CD8-positive, alpha-beta T cell (primary cell): ENCODE measurements at regions of chr4 and their contacts with region 1.

Region 1: DNA sequence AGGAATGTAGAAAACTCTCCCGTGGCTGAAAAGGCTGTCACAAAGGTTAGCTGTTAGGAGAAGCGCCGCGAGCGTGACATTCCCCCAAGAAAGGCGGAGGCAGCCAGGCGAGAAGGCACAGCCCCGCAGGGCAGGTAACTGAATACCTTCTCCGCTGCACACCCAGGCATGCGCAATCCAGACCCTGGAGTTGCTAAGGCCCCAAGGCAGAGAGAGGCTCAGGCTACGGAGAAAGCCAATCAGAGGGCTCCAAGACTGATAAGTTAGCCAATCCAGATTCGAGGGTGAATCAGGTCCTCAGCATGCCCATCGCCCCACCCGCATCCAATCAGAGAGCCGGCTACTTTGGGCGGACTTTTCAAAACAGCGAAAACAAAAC is 485 bp upstream of the CCNG2 start:
- DNase-seq: peak in 8 of 9 experiments; percentile 91 to 99 (median 97)
- ATAC-seq: peak; percentile 93
- H3K4me3 ChIP-seq: peak overlapping the region; percentile 83 to 93
- H3K4me3 Mint-ChIP-seq: peak overlapping the region; percentile 100
- H3K27ac ChIP-seq: peak overlapping the region; percentile 62 to 79
- H3K27ac Mint-ChIP-seq: peak overlapping the region; percentile 99
- H3K4me1 ChIP-seq: peaks cover 21% of the 10 kb centered on the region
- H3K4me1 Mint-ChIP-seq: peaks cover 39% of the 10 kb centered on the region
- H3K27me3 ChIP-seq: no peaks in the 10 kb centered on the region
- H3K27me3 Mint-ChIP-seq: no peaks in the 10 kb centered on the region
- CTCF ChIP-seq: no peak

Region 2: DNA sequence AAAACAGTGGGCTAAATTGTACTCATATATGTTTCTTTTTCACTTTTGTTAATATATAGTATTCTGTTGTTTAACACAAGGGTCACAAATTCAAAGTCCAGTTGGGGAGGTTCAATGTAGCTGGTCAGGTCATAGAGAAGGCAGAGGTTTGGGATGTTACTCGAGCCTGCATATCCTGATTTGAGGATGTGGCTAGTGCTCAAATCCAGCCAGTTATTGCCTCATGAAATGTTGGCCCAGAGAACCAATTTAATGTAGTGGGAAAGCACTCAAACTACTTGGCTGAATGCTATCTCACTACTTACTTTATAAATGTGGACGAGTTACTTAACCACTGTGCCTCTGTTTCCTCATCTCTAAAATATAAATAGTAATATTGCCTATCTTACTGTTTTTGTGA is 1419.7 kb before region 1 on chr4:
- CTCF ChIA-PET with region 1: no interaction called
- POLR2A ChIA-PET with region 1: no interaction called
- intact Hi-C with region 1: no loop called
- DNase-seq: no peak
- ATAC-seq: no peak
- H3K4me3 ChIP-seq: no peak overlapping the region
- H3K4me3 Mint-ChIP-seq: no peak overlapping the region
- H3K27ac ChIP-seq: no peak overlapping the region
- H3K27ac Mint-ChIP-seq: no peak overlapping the region
- H3K4me1 ChIP-seq: no peaks in the 10 kb centered on the region
- H3K4me1 Mint-ChIP-seq: peaks cover 32% of the 10 kb centered on the region
- H3K27me3 ChIP-seq: no peaks in the 10 kb centered on the region
- H3K27me3 Mint-ChIP-seq: no peaks in the 10 kb centered on the region
- CTCF ChIP-seq: no peak

Region 3: DNA sequence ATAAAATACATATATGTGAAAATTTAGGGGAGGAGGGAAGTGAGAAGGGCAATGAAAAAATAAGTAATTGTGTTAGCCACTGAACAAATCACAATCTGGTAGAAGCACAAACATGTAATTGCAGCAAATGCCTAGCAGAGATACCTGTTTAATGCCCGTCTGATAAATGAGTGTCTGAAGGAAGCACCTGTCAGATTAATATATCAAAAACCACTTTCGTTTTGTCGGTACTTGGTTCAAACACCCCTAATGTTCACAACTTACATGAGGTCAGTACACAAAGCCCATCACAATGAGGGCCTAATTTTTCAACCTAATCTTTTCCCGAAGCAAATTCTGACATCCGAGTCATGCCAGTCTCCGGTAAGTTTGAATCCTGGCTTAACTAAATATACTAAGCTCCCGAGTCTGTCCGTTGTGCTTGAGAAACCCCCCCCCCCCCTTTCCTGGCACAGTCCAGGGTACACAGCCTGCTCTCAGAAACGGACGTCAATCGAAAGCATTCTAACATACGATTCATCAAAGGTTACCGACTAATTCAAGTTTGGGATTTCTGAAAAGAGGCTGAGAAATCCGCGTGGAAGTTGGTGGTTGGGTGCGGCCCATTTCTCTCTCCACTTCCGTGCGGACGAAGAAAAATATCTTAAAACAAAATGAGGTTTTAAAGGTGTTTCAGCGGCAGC is 1166.5 kb before region 1 on chr4:
- CTCF ChIA-PET with region 1: no interaction called
- POLR2A ChIA-PET with region 1: no interaction called
- intact Hi-C with region 1: loop called in 1 of 2 experiments (anchors 2 kb)
- DNase-seq: peak in 2 of 9 experiments; percentile 8 to 32
- ATAC-seq: no peak
- H3K4me3 ChIP-seq: peak overlapping the region; percentile 78 to 91
- H3K4me3 Mint-ChIP-seq: peak overlapping the region; percentile 96
- H3K27ac ChIP-seq: peak overlapping the region; percentile 17 to 73
- H3K27ac Mint-ChIP-seq: peak overlapping the region; percentile 95
- H3K4me1 ChIP-seq: peaks cover 37% of the 10 kb centered on the region
- H3K4me1 Mint-ChIP-seq: peaks cover 29% of the 10 kb centered on the region
- H3K27me3 ChIP-seq: no peaks in the 10 kb centered on the region
- H3K27me3 Mint-ChIP-seq: peaks cover 1% of the 10 kb centered on the region
- CTCF ChIP-seq: no peak

Region 4: GRCh38 chr4:76949276-76950051 is 207.1 kb before region 1 on chr4 and contains the start of gene SEPTIN11:
- CTCF ChIA-PET with region 1: interaction called, 3 read pairs
- POLR2A ChIA-PET with region 1: interaction called, 3 read pairs
- intact Hi-C with region 1: loop called (anchors 1 to 2 kb)
- DNase-seq: peak; percentile 74 to 94 (median 84)
- ATAC-seq: peak; percentile 74
- H3K4me3 ChIP-seq: peak within 1 kb of the TSS; percentile 88 to 89
- H3K4me3 Mint-ChIP-seq: peak within 1 kb of the TSS; percentile 92
- H3K27ac ChIP-seq: peak within 1 kb of the TSS; percentile 56 to 66
- H3K27ac Mint-ChIP-seq: peak within 1 kb of the TSS; percentile 77
- H3K4me1 ChIP-seq: peaks cover 15% of the 10 kb centered on the region
- H3K4me1 Mint-ChIP-seq: peaks cover 24% of the 10 kb centered on the region
- H3K27me3 ChIP-seq: no peaks in the 10 kb centered on the region
- H3K27me3 Mint-ChIP-seq: no peaks in the 10 kb centered on the region
- CTCF ChIP-seq: no peak
- total RNA-seq, gene SEPTIN11: 12.3 to 13.1 TPM

Region 5: DNA sequence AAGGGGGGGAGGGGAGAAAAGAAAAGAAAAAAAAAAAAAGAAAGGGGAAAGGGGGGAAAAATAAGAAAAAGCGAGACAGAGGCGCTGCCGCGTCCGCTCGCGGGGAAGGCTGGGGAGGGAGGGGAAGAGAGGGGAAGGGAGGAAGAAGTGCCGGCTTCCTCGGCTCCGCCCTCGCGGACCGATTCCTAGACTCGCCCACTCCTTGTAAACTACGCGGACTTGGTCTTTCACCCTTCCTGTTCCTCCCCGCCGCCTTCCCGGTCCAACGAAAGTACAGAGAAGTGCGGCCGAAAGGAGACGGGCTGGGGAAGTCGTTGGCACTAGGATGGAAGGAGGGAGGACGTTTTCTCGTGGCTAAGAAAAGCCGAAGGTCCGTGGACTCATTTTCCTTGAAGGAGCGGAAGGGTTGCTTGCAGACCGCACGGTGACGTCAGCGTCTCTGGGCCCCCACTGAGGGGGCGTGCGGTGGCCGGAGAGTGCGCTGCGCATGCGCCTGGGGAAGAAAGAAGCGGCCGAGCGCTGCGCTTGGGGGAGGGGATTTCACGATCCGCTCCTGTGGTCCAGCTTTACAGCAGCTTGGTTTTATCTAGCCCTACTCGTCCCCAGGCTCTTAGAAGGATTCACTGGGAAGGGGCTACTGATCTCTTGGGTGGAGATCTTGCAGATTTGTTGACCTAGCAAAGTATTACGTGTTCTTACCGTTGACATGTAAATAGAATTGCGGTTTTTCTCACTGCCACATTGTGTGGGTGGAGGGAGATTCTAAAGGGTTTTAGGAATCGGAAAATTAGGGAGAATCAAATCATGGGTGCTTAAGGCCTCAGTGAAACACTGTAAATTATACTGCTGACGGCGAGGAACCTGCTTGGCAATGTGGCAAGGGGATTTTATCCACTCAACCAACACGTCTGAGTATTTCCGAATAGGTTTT is 80.4 kb before region 1 on chr4 and contains the start of gene CCNI:
- CTCF ChIA-PET with region 1: interaction called, 3 read pairs
- POLR2A ChIA-PET with region 1: interaction called, 9 read pairs
- intact Hi-C with region 1: loop called (anchors 1 kb)
- DNase-seq: peak; percentile 85 to 97 (median 92)
- ATAC-seq: peak; percentile 70
- H3K4me3 ChIP-seq: peak within 1 kb of the TSS; percentile 90 to 98
- H3K4me3 Mint-ChIP-seq: no peak within 1 kb of the TSS
- H3K27ac ChIP-seq: peak within 1 kb of the TSS; percentile 99 to 100
- H3K27ac Mint-ChIP-seq: peak within 1 kb of the TSS; percentile 100
- H3K4me1 ChIP-seq: peaks cover 42% of the 10 kb centered on the region
- H3K4me1 Mint-ChIP-seq: peaks cover 46% of the 10 kb centered on the region
- H3K27me3 ChIP-seq: no peaks in the 10 kb centered on the region
- H3K27me3 Mint-ChIP-seq: no peaks in the 10 kb centered on the region
- CTCF ChIP-seq: no peak
- total RNA-seq, gene CCNI: 381 to 403 TPM

Region 6: DNA sequence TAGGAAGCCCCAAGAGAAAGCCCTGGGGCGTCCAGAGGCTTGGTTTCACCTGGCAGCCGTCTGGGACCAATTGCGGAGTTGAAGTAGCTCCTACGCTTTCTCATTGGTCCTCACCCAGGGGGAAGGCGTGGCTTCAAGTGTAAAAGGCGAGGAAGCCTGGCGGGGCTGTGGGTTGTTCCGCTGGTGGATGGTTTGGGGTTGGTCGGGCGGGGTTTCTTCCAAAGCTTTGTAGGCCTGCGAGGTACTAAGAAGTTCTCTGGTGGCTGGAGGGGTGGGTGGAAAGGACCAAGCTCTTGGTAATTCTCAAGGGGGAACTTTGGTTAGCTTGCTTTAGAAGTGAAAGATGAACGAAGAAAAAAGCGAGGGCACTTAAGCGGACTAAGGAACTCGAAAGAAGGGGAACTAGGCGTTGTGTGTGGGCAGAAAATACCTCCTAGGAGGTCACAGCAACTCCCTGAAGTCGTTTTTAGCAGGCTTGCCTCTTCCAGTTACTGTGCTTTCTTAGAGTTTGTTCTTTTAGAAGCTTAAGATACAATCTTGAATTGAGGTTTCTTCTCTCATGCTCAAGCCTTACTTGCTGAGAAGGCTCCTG is 37.1 kb after region 1 on chr4:
- CTCF ChIA-PET with region 1: no interaction called
- POLR2A ChIA-PET with region 1: interaction called, 4 read pairs
- intact Hi-C with region 1: loop called (anchors 1 to 2 kb)
- DNase-seq: peak; percentile 31 to 83 (median 77)
- ATAC-seq: peak; percentile 99
- H3K4me3 ChIP-seq: peak overlapping the region; percentile 34 to 44
- H3K4me3 Mint-ChIP-seq: peak overlapping the region; percentile 91
- H3K27ac ChIP-seq: peak overlapping the region in 1 of 2 experiments; percentile 23
- H3K27ac Mint-ChIP-seq: peak overlapping the region; percentile 90
- H3K4me1 ChIP-seq: peaks cover 13% of the 10 kb centered on the region
- H3K4me1 Mint-ChIP-seq: peaks cover 17% of the 10 kb centered on the region
- H3K27me3 ChIP-seq: no peaks in the 10 kb centered on the region
- H3K27me3 Mint-ChIP-seq: peaks cover 4% of the 10 kb centered on the region
- CTCF ChIP-seq: no peak

Region 7: GRCh38 chr4:77418333-77419038 is 262.0 kb after region 1 on chr4:
- CTCF ChIA-PET with region 1: no interaction called
- POLR2A ChIA-PET with region 1: no interaction called
- intact Hi-C with region 1: no loop called
- DNase-seq: peak in 2 of 9 experiments; percentile 12 to 21
- ATAC-seq: no peak
- H3K4me3 ChIP-seq: no peak overlapping the region
- H3K4me3 Mint-ChIP-seq: no peak overlapping the region
- H3K27ac ChIP-seq: no peak overlapping the region
- H3K27ac Mint-ChIP-seq: no peak overlapping the region
- H3K4me1 ChIP-seq: no peaks in the 10 kb centered on the region
- H3K4me1 Mint-ChIP-seq: no peaks in the 10 kb centered on the region
- H3K27me3 ChIP-seq: no peaks in the 10 kb centered on the region
- H3K27me3 Mint-ChIP-seq: no peaks in the 10 kb centered on the region
- CTCF ChIP-seq: no peak

Region 8: DNA sequence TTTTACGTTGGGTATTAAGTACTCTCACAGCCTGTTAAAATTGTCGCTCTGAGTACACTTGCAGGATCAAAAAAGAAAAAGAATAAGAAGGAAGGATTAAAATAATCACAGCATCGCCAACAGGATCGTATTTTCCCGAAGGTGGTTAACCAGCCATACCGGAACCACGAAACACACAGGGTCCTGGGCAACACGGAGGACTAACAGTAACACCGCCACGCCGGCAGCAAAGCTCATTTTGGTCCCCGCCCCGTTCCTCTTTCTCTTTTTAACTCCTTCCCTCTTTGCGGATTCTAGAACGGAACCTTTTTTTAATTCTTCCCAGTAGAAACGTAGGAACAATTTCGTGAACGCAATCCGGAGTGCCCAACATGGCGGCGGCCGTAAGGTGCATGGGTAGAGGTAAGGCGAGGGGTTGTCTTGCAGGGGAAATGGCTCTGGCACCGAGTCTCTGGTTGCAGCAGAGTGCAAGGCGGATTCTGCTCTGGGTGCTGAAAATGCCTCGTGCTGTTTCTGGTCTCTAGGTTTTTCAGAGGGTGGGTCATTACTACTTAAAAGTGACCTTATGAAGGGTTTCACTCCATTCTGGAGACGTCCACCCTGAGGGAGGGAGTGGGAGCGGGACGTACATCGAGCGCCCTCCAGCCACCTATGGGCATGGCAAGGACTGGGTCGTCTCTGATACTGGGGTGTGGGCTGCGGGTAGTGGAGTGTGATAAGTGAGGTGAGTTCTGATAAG is 706.1 kb after region 1 on chr4 and contains the start of gene MRPL1:
- CTCF ChIA-PET with region 1: no interaction called
- POLR2A ChIA-PET with region 1: interaction called, 3 read pairs
- intact Hi-C with region 1: loop called (anchors 1 to 10 kb)
- DNase-seq: peak; percentile 77 to 96 (median 88)
- ATAC-seq: peak; percentile 76
- H3K4me3 ChIP-seq: peak within 1 kb of the TSS; percentile 63 to 76
- H3K4me3 Mint-ChIP-seq: peak within 1 kb of the TSS; percentile 94
- H3K27ac ChIP-seq: peak within 1 kb of the TSS; percentile 95 to 98
- H3K27ac Mint-ChIP-seq: peak within 1 kb of the TSS; percentile 99
- H3K4me1 ChIP-seq: peaks cover 26% of the 10 kb centered on the region
- H3K4me1 Mint-ChIP-seq: peaks cover 62% of the 10 kb centered on the region
- H3K27me3 ChIP-seq: no peaks in the 10 kb centered on the region
- H3K27me3 Mint-ChIP-seq: no peaks in the 10 kb centered on the region
- CTCF ChIP-seq: no peak
- total RNA-seq, gene MRPL1: 14.8 to 20.5 TPM

Region 9: DNA sequence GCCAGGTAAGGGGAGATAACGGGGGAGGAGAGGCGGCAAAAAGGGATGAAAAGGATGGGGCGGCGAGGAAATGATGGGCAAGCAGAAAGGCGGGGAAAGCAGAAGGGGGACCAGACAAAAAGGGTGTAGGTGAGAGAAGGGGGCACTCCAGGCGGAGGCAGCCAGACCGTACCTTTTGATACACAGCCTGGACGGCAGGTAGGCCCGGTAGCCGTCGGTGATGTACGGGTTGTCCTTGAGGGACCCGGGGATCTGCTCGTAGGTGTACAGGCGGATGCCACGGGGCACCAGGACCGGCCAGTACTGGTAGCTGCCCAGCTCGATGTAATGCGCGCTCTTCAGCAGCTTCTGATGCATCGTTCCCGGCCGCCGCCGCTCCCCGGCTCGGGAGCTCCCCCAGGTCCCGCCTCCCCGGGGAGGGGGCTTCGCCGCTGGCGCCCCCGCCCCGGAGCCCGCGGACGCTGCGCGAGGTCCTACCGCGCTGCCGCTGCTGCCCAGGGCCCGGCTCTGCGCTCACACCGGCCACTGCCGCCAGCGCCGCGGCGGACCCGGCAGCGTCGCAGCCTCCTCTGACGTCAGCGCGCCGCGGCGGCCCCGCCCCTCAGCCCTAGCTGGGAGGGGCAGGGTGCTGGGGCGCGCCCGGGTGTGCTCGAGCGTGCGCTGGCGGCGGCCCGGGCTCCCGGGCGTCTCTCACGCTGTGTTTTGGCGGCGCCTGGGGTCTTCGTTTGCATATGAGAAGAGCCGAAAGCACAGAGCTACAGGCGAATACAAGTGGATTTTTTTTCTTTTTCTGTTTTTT is 1782.5 kb after region 1 on chr4 and contains the start of gene PAQR3:
- CTCF ChIA-PET with region 1: no interaction called
- POLR2A ChIA-PET with region 1: no interaction called
- intact Hi-C with region 1: loop called in 1 of 2 experiments (anchors 5 kb)
- DNase-seq: peak; percentile 67 to 92 (median 83)
- ATAC-seq: peak; percentile 96
- H3K4me3 ChIP-seq: peak within 1 kb of the TSS; percentile 88 to 89
- H3K4me3 Mint-ChIP-seq: peak within 1 kb of the TSS; percentile 90
- H3K27ac ChIP-seq: peak within 1 kb of the TSS; percentile 67 to 77
- H3K27ac Mint-ChIP-seq: peak within 1 kb of the TSS; percentile 86
- H3K4me1 ChIP-seq: peaks cover 26% of the 10 kb centered on the region
- H3K4me1 Mint-ChIP-seq: peaks cover 40% of the 10 kb centered on the region
- H3K27me3 ChIP-seq: no peaks in the 10 kb centered on the region
- H3K27me3 Mint-ChIP-seq: peaks cover 11% of the 10 kb centered on the region
- CTCF ChIP-seq: no peak
- total RNA-seq, gene PAQR3: 17.8 to 19.3 TPM